Posterior vena cava (tissue), 2 donors: ENCODE measurements at regions of chr12 and their contacts with region 1.

Region 1: DNA sequence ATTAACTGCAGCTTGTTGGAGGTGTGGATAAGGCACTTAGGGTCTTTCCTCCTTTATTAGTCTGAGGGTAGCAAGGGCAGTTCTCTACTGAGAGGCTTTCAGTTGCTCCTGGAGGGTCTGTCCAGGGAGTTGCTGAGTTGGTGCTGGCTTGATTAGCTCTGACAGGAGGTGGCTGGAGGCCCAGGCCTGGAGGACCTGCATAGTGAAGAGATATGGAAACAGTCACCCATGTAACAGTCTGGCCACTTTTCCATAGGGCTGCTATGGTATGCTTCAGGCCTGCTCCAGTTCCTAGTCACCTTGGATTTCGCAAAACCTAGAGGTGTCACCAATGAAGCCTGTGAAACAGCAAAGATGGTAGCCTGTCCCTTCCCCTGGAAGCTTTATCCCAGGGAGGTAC is 143.3 kb upstream of the SLC38A2 start:
- DNase-seq: no peak

Region 2: GRCh38 chr12:46483572-46484395 is 32.0 kb before region 1 on chr12:
- intact Hi-C with region 1: loop called in 1 of 2 experiments (anchors 2 kb)
- DNase-seq: no peak